Prostate gland (tissue), 2 donors: ENCODE measurements at regions of chr12 and their contacts with region 1.

Region 1: GRCh38 chr12:53675651-53676453 is at the start of gene ATP5MC2:
- DNase-seq: peak; percentile 97
- H3K4me3 ChIP-seq: peak within 1 kb of the TSS; percentile 57 to 59
- H3K27ac ChIP-seq: peak within 1 kb of the TSS; percentile 84 to 89
- H3K4me1 ChIP-seq: peaks cover 9% of the 10 kb centered on the region
- H3K27me3 ChIP-seq: no peaks in the 10 kb centered on the region
- CTCF ChIP-seq: peak; percentile 99 to 100 (median 100)
- POLR2A ChIP-seq: peak; percentile 78
- total RNA-seq, gene ATP5MC2: 419 to 728 TPM

Region 2: DNA sequence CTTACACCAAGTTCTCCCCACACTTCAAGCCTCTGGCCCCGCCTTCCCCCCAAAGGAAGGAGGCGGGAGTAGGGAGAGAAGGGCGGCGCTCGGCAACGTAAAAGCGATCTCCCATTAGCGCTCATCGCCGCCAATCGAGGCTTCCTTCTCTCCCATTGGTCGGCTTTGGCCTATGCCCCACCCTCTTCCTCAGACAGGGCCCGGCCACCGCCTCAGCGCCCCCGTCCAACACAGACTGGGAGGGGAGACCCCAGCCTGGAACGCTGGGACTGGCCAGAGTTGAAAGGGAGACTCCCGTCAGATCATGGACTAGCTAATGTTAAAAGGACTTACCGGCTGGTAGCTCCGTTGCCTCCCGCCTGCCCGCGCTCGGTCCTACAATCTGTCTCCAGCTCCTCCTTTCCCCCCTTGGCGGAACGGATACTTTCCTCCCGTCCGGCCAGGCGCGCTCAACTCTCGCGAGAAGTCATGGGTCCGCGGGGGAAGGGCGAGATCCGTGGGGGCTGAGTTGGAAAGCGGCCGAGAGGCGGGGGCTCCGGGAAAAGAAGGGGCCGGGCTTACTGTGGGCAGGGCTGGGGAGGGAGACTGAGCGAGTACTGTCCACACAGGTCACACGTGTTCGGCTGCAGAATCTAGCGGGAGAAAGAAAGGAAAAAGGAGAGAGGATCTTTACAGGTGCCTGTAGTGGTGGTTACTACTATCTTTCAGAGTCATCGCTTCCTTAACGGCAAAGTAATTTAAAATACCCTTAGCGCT is 49.7 kb before region 1 on chr12 and contains the start of gene ATF7:
- intact Hi-C with region 1: loop called (anchors 2 kb)
- DNase-seq: peak; percentile 98
- H3K4me3 ChIP-seq: peak within 1 kb of the TSS; percentile 50 to 64
- H3K27ac ChIP-seq: peak within 1 kb of the TSS; percentile 92 to 97
- H3K4me1 ChIP-seq: peaks cover 4% of the 10 kb centered on the region
- H3K27me3 ChIP-seq: no peaks in the 10 kb centered on the region
- CTCF ChIP-seq: no peak
- POLR2A ChIP-seq: peak; percentile 57
- total RNA-seq, gene ATF7: 37.9 to 46.7 TPM